Vagina (tissue), 2 donors: ENCODE measurements at regions of chr5 and their contacts with region 1.

Region 1: GRCh38 chr5:43040287-43041098 is at the start of gene ANXA2R:
- DNase-seq: no peak
- H3K4me3 ChIP-seq: peak within 1 kb of the TSS; percentile 49 to 58
- H3K27ac ChIP-seq: peak within 1 kb of the TSS; percentile 83
- H3K4me1 ChIP-seq: peaks cover 9% of the 10 kb centered on the region
- H3K27me3 ChIP-seq: no peaks in the 10 kb centered on the region
- CTCF ChIP-seq: peak; percentile 47 to 81 (median 54)
- POLR2A ChIP-seq: no peak
- total RNA-seq, gene ANXA2R: 10.6 TPM

Region 2: DNA sequence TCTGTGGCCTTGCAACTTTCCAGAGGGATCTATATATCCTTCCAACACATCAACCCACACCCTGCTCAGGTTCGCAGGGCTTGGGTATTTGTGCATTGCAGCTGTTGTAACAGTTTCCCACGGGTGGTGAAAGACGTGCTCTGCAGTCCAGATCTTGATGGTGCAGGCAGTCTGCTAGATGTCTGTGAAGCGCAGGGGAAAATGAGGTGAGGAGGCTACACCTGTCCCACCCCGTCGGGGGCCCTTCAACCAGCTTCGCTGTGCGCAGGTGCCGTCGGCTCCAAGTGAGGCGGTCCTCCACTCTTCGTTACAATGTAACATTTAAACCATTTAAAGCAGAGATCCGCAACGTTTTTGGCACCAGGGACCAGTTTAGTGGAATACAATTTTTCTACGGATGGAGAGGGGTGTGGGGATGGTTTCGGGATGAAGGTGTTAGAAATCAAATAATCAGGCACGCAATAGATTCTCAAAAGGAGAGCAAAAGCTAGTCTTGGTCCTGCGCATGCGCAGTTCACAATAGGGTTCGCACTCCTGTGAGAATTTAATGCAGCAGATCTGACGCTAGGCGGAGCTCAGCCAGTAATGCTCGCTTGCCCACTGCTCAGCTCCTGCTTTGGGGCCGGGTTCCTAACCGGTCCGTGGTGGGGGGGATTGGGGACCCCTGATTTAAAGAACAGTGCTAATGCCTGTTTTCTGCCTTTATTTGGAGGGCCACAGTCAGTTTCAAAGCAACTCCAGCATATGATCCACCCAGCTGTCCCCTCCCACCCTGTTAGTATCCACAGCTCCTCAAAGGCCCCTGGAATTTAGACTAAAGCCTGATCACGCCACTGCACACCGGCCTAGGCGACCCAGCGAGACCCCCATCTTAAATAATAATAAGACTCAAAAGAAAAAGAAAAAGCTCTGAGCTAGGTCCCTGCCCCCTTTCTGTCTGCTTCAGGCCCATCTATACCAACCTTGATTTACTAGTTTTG is 131.7 kb before region 1 on chr5:
- intact Hi-C with region 1: loop called (anchors 5 kb)
- DNase-seq: no peak
- H3K4me3 ChIP-seq: peak overlapping the region; percentile 42 to 45
- H3K27ac ChIP-seq: no peak overlapping the region
- H3K4me1 ChIP-seq: no peaks in the 10 kb centered on the region
- H3K27me3 ChIP-seq: no peaks in the 10 kb centered on the region
- CTCF ChIP-seq: peak; percentile 63 to 91 (median 78)
- POLR2A ChIP-seq: no peak

Region 3: DNA sequence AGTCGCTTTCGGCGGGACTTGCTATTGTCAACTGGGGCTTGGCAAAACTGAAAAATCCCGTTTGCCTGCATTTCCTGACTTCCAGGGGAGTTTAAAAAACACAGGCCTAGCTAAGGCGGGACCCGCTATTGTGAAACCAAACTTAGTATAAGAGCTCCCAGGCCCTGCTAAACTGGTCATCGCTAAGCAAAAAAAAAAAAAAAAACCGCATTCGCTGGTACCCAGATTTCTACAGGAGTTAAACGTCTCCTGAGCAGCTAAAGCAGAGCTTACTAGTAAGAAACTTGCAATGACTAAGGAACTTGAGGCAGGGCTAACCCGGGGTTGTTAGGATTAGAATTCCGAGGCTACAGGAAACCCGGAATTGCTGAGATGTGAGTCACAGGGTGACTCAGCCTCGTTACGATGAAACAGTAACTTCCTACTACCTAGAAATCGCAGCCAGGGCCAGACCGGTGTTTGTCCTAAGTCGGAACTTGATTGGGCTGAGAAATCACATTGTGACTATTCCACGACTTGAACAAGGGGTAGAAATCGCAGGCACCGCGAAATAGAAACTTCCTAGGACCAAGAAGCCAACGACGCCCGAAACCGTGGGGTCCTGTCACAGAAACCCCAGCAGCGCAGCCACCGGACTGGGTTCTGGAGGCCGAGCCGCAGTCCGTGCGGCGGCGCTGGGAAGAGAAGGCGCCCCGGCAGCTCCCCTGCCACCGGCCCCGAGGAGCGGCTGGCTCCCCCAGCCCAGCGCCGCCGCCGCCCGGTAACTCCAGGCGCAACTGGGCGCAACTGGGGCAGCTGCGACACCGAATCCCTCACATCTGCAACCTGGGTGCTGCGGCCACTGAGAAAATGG is 89.8 kb before region 1 on chr5:
- intact Hi-C with region 1: loop called (anchors 5 kb)
- DNase-seq: peak in 1 of 2 donors; percentile 94
- H3K4me3 ChIP-seq: peak overlapping the region; percentile 45 to 63
- H3K27ac ChIP-seq: peak overlapping the region; percentile 93
- H3K4me1 ChIP-seq: peaks cover 12% of the 10 kb centered on the region
- H3K27me3 ChIP-seq: no peaks in the 10 kb centered on the region
- CTCF ChIP-seq: no peak
- POLR2A ChIP-seq: no peak

Region 4: DNA sequence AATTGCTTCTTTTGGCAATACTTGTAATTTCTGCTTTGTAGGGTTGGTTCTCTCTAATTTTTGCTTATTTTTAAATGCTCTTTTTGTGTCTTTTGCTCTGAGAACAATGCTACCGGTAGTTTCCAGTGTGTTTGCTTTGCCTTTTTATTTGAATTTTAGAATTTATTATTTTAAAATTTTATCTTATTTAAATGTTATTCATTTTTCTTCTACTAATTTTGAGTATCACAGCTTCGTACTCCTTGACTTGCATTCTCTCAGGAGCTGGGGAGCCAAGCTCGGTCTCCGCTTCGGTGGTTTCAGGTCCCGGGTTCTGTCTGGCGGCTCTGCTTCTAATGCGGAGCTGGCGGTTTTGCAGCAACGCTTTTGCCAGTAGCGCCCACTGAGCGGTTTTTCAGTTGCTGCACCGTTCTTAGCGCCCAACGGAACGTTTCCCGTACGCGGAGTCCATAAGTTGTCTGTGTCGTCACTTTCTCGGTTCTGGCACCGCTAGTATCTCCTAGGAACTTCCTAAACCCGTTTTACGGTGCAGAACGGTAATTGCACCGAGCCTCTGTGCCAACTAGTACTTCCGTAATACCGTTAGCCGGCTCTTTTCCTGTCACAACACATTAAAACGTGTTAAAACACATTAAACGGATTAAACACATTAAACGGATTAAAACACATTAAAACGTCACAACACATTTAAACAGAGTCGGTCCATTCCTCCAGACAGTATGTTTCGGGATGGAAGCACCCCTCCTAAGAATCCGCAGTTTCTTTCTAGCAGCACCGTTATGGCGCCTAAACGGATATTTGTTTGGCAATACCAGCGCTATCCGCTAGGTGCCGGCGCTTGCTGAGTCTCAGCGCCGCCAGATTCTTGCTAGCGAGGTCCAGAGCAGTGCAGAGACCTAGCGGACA is 46.0 kb before region 1 on chr5:
- intact Hi-C with region 1: loop called (anchors 5 kb)
- DNase-seq: no peak
- H3K4me3 ChIP-seq: peak overlapping the region; percentile 46 to 59
- H3K27ac ChIP-seq: peak overlapping the region; percentile 89
- H3K4me1 ChIP-seq: peaks cover 6% of the 10 kb centered on the region
- H3K27me3 ChIP-seq: no peaks in the 10 kb centered on the region
- CTCF ChIP-seq: peak; percentile 23 to 92 (median 76)
- POLR2A ChIP-seq: no peak

Region 5: DNA sequence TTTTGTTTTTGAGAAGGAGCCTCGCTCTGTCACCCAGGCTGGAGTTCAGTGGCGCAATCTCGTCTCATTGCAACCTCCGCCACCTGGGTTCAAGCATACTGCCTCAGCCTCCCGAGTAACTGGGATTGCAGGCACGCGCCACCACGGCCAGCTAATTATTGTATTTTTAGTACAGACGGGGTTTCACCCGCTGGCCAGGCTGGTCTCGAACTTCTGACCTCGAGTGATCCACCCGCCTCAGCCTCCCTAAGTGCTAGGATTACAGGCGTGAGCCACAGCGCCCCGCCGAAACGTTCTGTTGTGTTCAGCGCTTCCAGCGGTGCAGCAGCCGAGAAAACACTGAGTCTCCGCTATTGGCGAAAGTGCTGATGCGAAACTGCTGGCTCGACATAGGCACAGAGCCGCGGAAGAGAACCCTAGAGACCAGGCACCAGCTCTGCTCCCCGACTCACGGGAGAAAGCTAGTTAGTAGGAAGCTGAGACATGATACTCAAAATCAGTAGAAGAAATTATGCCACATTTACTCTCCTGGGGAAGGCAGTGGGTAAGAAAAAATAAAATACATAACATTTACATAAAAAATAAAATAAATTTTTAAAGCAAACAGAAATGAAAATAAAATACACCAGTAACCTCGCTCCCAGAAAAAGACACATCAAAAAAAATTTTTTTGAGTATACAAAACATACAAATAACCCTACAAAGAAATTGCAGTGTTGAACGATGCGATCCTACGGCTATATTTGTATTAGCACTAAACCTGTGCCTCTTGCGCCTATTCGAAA is 31.9 kb before region 1 on chr5:
- intact Hi-C with region 1: loop called (anchors 5 kb)
- DNase-seq: no peak
- H3K4me3 ChIP-seq: peak overlapping the region; percentile 55 to 57
- H3K27ac ChIP-seq: peak overlapping the region; percentile 91
- H3K4me1 ChIP-seq: peaks cover 16% of the 10 kb centered on the region
- H3K27me3 ChIP-seq: no peaks in the 10 kb centered on the region
- CTCF ChIP-seq: no peak
- POLR2A ChIP-seq: peak in 1 of 2 donors; percentile 70

Region 6: DNA sequence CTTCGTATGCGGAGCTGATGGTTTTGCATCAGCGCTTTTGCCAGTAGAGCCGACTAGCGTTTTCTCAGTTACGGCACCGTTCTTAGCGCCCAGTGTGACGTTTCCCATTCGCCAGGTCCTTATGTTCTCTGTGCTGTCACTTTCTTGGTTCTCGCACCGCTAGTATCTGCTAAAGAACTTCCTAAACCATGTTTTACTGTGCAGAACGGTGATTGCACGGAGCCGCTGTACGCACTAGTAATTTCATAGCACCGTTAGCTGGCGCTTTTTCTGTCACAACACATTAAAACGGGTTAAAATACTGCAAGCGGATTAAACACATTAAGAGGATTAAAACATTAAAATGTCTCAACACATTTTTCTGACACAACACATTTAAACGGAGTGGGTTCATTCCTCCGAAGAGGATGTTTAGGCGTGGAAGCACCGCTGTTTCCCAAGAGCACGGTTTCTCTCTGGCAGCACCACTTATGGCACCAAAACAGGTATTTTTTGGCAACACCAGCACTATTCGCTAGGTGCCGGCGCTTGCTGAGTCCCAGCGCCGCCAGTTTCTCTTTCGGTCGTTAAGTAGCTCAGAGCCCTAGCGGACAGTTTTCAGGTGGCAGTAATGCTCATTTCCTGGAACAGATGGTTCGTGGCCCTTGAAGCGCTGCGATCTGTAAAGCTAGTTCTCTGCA is 20.7 kb before region 1 on chr5:
- intact Hi-C with region 1: loop called (anchors 2 kb)
- DNase-seq: peak in 1 of 2 donors; percentile 85
- H3K4me3 ChIP-seq: peak overlapping the region; percentile 36 to 76
- H3K27ac ChIP-seq: peak overlapping the region; percentile 98
- H3K4me1 ChIP-seq: peaks cover 18% of the 10 kb centered on the region
- H3K27me3 ChIP-seq: no peaks in the 10 kb centered on the region
- CTCF ChIP-seq: peak in 2 of 3 experiments; percentile 26 to 55
- POLR2A ChIP-seq: no peak

Region 7: GRCh38 chr5:43066799-43067741 is 26.6 kb after region 1 on chr5:
- intact Hi-C with region 1: loop called (anchors 1 kb)
- DNase-seq: peak in 1 of 2 donors; percentile 98
- H3K4me3 ChIP-seq: peak overlapping the region; percentile 75 to 90
- H3K27ac ChIP-seq: peak overlapping the region; percentile 99
- H3K4me1 ChIP-seq: peaks cover 29% of the 10 kb centered on the region
- H3K27me3 ChIP-seq: no peaks in the 10 kb centered on the region
- CTCF ChIP-seq: no peak
- POLR2A ChIP-seq: peak in 1 of 2 donors; percentile 78